Cardiac septum (tissue), 1 donor: ENCODE measurements at regions of chr14 and their contacts with region 1.

Region 1: DNA sequence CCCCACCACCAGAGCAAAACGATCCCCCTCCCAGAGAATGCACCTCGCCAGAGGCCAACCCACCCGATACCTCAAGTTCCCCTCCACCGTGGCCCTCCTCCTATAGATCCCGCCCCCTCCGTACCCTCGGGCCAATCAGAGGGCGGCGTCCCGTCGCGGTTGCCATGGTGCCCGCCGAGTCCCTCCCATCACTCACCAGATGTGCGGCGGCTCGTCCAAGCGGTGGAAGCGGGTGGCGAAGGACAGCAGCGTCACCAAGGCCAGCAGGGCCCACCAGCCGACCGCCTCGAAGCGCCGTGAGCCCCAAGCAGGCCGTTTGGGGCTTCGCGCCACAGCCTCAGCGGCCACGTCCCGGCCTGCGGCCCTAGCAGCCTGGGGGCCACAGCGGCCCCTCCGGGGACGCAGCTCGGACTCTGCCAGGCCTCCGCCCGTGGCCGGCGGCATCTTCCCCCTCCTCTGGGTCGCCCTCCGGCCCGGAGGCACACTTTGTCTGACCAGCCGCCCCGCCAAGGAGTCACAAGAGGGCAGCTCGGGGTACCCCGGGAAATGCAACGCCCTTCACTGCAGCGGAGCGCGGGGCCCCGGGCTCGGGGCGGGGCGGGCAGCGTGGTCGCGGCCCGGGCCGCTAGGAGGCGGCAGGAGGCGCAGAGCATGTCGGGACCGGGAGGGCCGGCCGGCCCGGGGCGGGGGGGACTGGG is at the start of gene POMT2:
- DNase-seq: peak; percentile 98
- total RNA-seq, gene POMT2: 19.9 TPM

Region 2: GRCh38 chr14:76876076-76876475 is 444.3 kb before region 1 on chr14:
- intact Hi-C with region 1: loop called (anchors 5 kb)
- DNase-seq: no peak

Region 3: GRCh38 chr14:77097700-77098528 is 222.5 kb before region 1 on chr14 and contains the start of gene CIPC:
- intact Hi-C with region 1: loop called (anchors 2 kb)
- DNase-seq: peak; percentile 100
- total RNA-seq, gene CIPC: 45.9 TPM

Region 4: GRCh38 chr14:77151918-77152588 is 168.3 kb before region 1 on chr14:
- intact Hi-C with region 1: loop called (anchors 5 kb)
- DNase-seq: no peak

Region 5: GRCh38 chr14:77376771-77377501 is 56.5 kb after region 1 on chr14 and contains the starts of genes SAMD15 and TMED8:
- intact Hi-C with region 1: loop called (anchors 5 kb)
- DNase-seq: peak; percentile 94
- total RNA-seq, gene SAMD15: 0.11 TPM
- total RNA-seq, gene TMED8: 5.6 TPM

Region 6: GRCh38 chr14:77457522-77458290 is 137.3 kb after region 1 on chr14 and contains the starts of genes AHSA1 and VIPAS39:
- intact Hi-C with region 1: loop called (anchors 2 kb)
- DNase-seq: peak; percentile 98
- total RNA-seq, gene AHSA1: 138 TPM
- total RNA-seq, gene VIPAS39: 12.5 TPM